ENCODE measurements at regions of chr17 and their contacts with region 1.

Region 1: DNA sequence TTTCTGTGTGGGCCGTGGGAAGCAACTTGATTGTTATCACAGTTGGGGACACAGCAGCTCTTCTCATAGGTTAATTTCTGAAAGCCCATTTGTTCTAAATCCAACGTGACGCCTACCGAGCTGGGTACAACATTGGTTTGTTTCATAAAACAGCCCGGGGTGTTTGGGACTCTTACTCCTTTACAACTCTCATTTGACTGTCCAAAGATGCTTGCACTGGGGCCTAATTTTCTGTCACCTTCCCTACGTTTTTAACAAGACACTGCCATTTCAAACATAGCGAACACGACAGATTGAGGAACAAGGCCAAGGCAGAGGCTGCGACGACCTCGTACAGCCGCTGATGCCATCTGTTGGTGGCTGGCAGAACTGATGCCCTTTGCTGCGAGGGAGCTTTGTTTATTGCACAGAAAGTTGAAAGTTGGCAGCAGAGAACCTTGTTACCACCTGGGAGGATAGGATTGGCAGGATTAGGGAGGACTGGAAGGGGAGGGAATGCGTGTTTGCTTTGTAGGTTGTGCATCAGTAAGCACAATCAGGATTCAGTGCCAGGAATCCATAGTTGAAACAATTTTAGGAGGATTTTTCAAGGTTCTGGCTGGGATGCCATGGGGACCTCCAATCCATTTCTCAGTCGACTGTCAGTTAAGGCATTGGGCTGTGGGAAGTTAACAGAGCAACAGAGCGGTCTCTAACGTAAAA is 98.3 kb downstream of the PITPNC1 start:
- DNase-seq: peak; percentile 50
- ATAC-seq: peak; percentile 99
- H3K4me3 Mint-ChIP-seq: peak overlapping the region; percentile 48
- H3K27ac Mint-ChIP-seq: peak overlapping the region; percentile 36
- H3K4me1 Mint-ChIP-seq: peaks cover 10% of the 10 kb centered on the region
- H3K27me3 Mint-ChIP-seq: no peaks in the 10 kb centered on the region
- CTCF ChIP-seq: no peak

Region 2: GRCh38 chr17:67534941-67535340 is 59.6 kb after region 1 on chr17:
- CTCF ChIA-PET with region 1: no interaction called
- POLR2A ChIA-PET with region 1: no interaction called
- intact Hi-C with region 1: loop called (anchors 5 kb)
- DNase-seq: no peak
- ATAC-seq: no peak
- H3K4me3 Mint-ChIP-seq: no peak overlapping the region
- H3K27ac Mint-ChIP-seq: no peak overlapping the region
- H3K4me1 Mint-ChIP-seq: peaks cover 8% of the 10 kb centered on the region
- H3K27me3 Mint-ChIP-seq: no peaks in the 10 kb centered on the region
- CTCF ChIP-seq: no peak

Region 3: GRCh38 chr17:67602956-67603355 is 127.6 kb after region 1 on chr17:
- CTCF ChIA-PET with region 1: interaction called, 3 read pairs
- POLR2A ChIA-PET with region 1: no interaction called
- intact Hi-C with region 1: loop called (anchors 10 kb)
- DNase-seq: no peak
- ATAC-seq: peak; percentile 75
- H3K4me3 Mint-ChIP-seq: no peak overlapping the region
- H3K27ac Mint-ChIP-seq: no peak overlapping the region
- H3K4me1 Mint-ChIP-seq: no peaks in the 10 kb centered on the region
- H3K27me3 Mint-ChIP-seq: no peaks in the 10 kb centered on the region
- CTCF ChIP-seq: no peak

Measured in activated B cell treated with CpG ODN at 0.5 μM for 24 hours (primary cell).